Right ventricle myocardium inferior (tissue), 1 donor: ENCODE measurements at regions of chr15 and their contacts with region 1.

Region 1: GRCh38 chr15:57923306-57923705 is 142.2 kb downstream of the ALDH1A2 start:
- DNase-seq: no peak
- ATAC-seq: peak; percentile 85

Region 2: GRCh38 chr15:57866149-57866736 is 57.1 kb before region 1 on chr15:
- intact Hi-C with region 1: loop called (anchors 2 kb)
- DNase-seq: peak; percentile 69
- ATAC-seq: peak; percentile 20

Region 3: DNA sequence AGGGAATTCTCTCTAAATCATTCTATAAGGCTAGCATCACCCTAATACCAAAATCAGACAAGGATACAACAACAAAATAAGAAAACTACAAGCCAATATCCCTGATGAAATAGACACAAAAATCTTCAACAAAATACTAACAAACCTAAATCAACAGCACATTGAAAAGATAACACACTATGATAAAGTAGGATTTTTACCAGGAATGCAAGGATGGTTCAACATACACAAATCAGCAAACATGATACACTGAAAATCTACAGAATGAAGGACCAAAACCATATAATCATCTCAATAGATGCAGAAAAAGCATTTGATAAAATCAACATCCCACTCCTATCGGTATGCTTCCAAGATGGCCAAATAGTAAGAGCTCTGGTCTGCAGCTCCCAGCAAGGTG is 102.7 kb after region 1 on chr15:
- intact Hi-C with region 1: no loop called
- DNase-seq: no peak
- ATAC-seq: no peak

Region 4: GRCh38 chr15:58043192-58043903 is 120.0 kb after region 1 on chr15:
- intact Hi-C with region 1: loop called (anchors 5 kb)
- DNase-seq: peak; percentile 59
- ATAC-seq: peak; percentile 48